Heart right ventricle (tissue), 16 donors: ENCODE measurements at regions of chr20 and their contacts with region 1.

Region 1: GRCh38 chr20:64053841-64054661 is 4.6 kb upstream of the SOX18 start:
- DNase-seq: peak; percentile 80 to 90
- ATAC-seq: peak; percentile 29 to 55 (median 40)
- H3K4me3 ChIP-seq: peak overlapping the region in 7 of 10 donors; percentile 7 to 75 (median 34)
- H3K27ac ChIP-seq: peak overlapping the region; percentile 80 to 98 (median 92)
- H3K4me1 ChIP-seq: peaks cover 6 to 82% (median 52%) of the 10 kb centered on the region in 9 donors
- H3K27me3 ChIP-seq: peaks cover 0 to 73% (median 33%) of the 10 kb centered on the region in 7 donors
- CTCF ChIP-seq: peak in 2 of 9 donors; percentile 19 to 22

Region 2: GRCh38 chr20:63686492-63687321 is 367.3 kb before region 1 on chr20:
- intact Hi-C with region 1: loop called in 1 of 10 experiments (anchors 5 kb)
- DNase-seq: peak; percentile 77 to 89
- ATAC-seq: peak; percentile 69 to 83 (median 76)
- H3K4me3 ChIP-seq: peak overlapping the region in 5 of 10 donors; percentile 8 to 25 (median 19)
- H3K27ac ChIP-seq: peak overlapping the region; percentile 79 to 96 (median 93)
- H3K4me1 ChIP-seq: peaks cover 30 to 68% (median 56%) of the 10 kb centered on the region in 9 donors
- H3K27me3 ChIP-seq: no peaks in the 10 kb centered on the region
- CTCF ChIP-seq: no peak